Thyroid gland (tissue), 4 donors: ENCODE measurements at regions of chr15 and their contacts with region 1.

Region 1: GRCh38 chr15:64153480-64154367 is 2.2 kb downstream of the SNX22 start:
- DNase-seq: peak; percentile 90 to 94
- H3K4me3 ChIP-seq: peak overlapping the region in 2 of 3 donors; percentile 69 to 93
- H3K27ac ChIP-seq: peak overlapping the region; percentile 69 to 88 (median 87)
- H3K4me1 ChIP-seq: peaks cover 12 to 39% of the 10 kb centered on the region in 2 donors
- H3K27me3 ChIP-seq: no peaks in the 10 kb centered on the region
- CTCF ChIP-seq: peak; percentile 92 to 99 (median 96)
- POLR2A ChIP-seq: peak in 1 of 2 donors; percentile 44

Region 2: DNA sequence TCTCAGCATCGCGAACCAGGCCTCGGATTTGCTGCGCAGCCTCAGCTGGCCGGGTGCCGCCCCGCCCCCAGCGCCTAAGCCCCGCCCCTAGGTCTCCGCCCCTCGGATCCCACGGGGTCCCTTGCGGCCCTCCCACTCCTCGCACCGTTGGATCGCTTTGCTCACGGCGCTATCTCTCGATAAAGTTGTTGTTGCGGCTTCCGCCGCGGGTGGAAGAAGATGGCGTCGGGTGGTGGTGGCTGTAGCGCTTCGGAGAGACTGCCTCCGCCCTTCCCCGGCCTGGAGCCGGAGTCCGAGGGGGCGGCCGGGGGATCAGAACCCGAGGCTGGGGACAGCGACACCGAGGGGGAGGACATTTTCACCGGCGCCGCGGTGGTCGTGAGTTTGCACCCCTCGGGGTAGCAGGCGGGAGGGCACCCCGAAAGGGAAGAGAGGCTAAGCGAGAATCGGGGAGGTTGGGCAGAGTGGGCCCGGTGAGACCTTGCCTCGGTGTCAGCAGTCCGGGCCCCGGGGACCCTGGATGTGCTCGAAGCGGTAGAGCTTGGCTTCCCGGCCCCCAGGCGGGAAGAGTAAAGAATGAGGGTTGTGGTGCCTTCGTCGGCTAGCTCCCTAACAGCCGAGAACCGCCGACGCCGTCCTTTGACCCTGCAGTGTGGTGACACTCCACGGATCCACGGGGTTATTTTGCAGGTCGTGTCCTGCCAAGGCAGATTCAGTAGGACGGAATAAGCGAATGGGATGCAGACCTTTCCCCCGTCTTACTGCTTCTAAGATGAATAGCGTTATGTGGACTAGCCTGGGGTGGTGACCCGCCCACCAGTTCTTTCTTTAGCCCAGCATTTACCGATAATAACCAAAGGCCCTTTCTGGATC is 57.7 kb before region 1 on chr15 and contains the start of gene SNX1:
- intact Hi-C with region 1: loop called (anchors 5 kb)
- DNase-seq: peak; percentile 94 to 95
- H3K4me3 ChIP-seq: peak within 1 kb of the TSS; percentile 72 to 96 (median 93)
- H3K27ac ChIP-seq: peak within 1 kb of the TSS; percentile 83 to 96 (median 93)
- H3K4me1 ChIP-seq: peaks cover 33 to 55% of the 10 kb centered on the region in 2 donors
- H3K27me3 ChIP-seq: no peaks in the 10 kb centered on the region
- CTCF ChIP-seq: peak in 4 of 6 experiments; percentile 12 to 31 (median 20)
- POLR2A ChIP-seq: peak; percentile 89 to 96
- total RNA-seq, gene SNX1: 184 to 348 (median 211) TPM